Caco-2 (cell line): ENCODE measurements at regions of chr10 and their contacts with region 1.

Region 1: GRCh38 chr10:84205049-84205852 is 10.9 kb downstream of the CDHR1 start:
- DNase-seq: peak; percentile 59 to 70
- H3K4me3 ChIP-seq: no peak overlapping the region
- H3K4me3 Mint-ChIP-seq: no peak overlapping the region
- H3K27ac Mint-ChIP-seq: no peak overlapping the region
- H3K4me1 ChIP-seq: no peaks in the 10 kb centered on the region
- H3K4me1 Mint-ChIP-seq: no peaks in the 10 kb centered on the region
- H3K27me3 ChIP-seq: no peaks in the 10 kb centered on the region; the same call in 1 of the 2 replicates
- H3K27me3 Mint-ChIP-seq: peaks cover 28% of the 10 kb centered on the region
- CTCF ChIP-seq: peak; percentile 74 to 88

Region 2: GRCh38 chr10:84139126-84140035 is 65.9 kb before region 1 on chr10 and contains the start of gene GHITM:
- CTCF ChIA-PET with region 1: no interaction called
- POLR2A ChIA-PET with region 1: no interaction called
- intact Hi-C with region 1: no loop called
- DNase-seq: peak; percentile 98 to 99
- H3K4me3 ChIP-seq: peak within 1 kb of the TSS; percentile 89
- H3K4me3 Mint-ChIP-seq: peak within 1 kb of the TSS; percentile 92
- H3K27ac Mint-ChIP-seq: peak within 1 kb of the TSS; percentile 98
- H3K4me1 ChIP-seq: peaks cover 26% of the 10 kb centered on the region
- H3K4me1 Mint-ChIP-seq: peaks cover 36% of the 10 kb centered on the region
- H3K27me3 ChIP-seq: no peaks in the 10 kb centered on the region
- H3K27me3 Mint-ChIP-seq: no peaks in the 10 kb centered on the region
- CTCF ChIP-seq: peak; percentile 49 to 51
- total RNA-seq, gene GHITM: 240 and 255 TPM in 2 replicates

Region 3: DNA sequence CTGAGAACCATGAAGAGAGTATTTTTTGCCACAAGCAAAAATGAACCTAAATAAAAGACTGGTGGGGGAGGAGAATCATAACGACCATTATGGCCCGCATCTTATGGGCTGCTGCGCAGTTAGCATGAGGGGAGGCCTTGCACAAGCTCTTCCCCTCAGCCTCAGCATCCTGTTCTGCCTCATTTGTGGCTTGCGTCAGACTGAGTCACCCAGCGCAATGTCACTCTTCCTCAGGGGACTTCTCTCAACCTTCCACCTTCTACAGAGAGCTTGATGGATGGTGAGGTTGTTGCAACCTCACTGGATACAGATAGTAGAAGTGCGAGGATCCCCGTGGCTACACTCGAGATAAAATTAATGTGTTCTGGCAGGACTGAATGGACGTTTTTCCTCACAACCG is 48.5 kb before region 1 on chr10:
- CTCF ChIA-PET with region 1: no interaction called
- POLR2A ChIA-PET with region 1: no interaction called
- intact Hi-C with region 1: loop called (anchors 1 kb)
- DNase-seq: no peak
- H3K4me3 ChIP-seq: no peak overlapping the region
- H3K4me3 Mint-ChIP-seq: no peak overlapping the region
- H3K27ac Mint-ChIP-seq: no peak overlapping the region
- H3K4me1 ChIP-seq: no peaks in the 10 kb centered on the region
- H3K4me1 Mint-ChIP-seq: no peaks in the 10 kb centered on the region
- H3K27me3 ChIP-seq: no peaks in the 10 kb centered on the region
- H3K27me3 Mint-ChIP-seq: no peaks in the 10 kb centered on the region
- CTCF ChIP-seq: no peak